CD4-positive, alpha-beta T cell (primary cell): ENCODE measurements at regions of chr6 and their contacts with region 1.

Region 1: DNA sequence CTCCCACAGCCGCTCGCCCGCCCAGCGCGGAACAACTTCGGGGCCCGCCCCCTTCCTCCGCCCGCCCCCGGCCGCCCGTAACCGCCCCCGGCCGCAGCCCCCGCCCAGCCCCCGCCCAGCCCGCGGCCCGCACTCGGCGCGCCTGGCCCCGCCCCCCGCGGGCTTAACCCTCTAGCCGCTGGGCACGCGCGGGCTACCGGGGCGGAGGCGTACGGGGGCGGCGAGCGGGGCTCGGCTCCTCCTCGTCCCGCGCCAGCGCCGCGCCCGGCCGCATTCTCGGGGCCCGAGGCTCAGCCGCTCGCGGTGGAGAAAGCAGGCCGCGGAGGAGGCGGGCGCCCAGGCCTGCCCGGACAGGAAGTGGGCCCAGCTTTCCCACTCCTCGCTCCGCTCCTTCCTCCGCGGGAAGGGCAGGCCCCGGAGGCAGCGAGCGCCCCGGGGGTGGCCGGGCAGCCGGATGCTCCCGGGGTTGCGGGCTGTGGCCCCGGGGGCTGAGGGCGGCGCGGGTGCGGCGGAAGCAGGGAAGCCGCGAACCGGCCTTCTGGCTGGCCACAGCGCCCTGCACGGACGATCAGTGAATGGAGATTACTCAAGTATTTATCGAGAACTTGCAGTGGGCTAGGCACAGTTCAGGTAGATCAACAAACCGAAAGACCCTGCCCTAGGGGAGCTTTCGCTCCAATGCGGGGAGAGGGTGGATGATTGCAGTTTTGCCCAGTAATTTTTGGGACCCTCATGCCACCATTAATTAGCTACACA is at the start of gene TRAM2:
- DNase-seq: peak; percentile 61 to 92 (median 75)
- ATAC-seq: peak; percentile 67
- H3K4me3 ChIP-seq: peak within 1 kb of the TSS; percentile 69
- H3K4me3 Mint-ChIP-seq: peak within 1 kb of the TSS; percentile 86
- H3K27ac ChIP-seq: peak within 1 kb of the TSS in 1 of 2 donors; percentile 60
- H3K27ac Mint-ChIP-seq: peak within 1 kb of the TSS; percentile 86
- H3K4me1 ChIP-seq: peaks cover 39% of the 10 kb centered on the region
- H3K4me1 Mint-ChIP-seq: peaks cover 56% of the 10 kb centered on the region
- H3K27me3 ChIP-seq: no peaks in the 10 kb centered on the region
- H3K27me3 Mint-ChIP-seq: no peaks in the 10 kb centered on the region
- CTCF ChIP-seq: no peak
- total RNA-seq, gene TRAM2: 7.1 to 7.6 TPM

Region 2: DNA sequence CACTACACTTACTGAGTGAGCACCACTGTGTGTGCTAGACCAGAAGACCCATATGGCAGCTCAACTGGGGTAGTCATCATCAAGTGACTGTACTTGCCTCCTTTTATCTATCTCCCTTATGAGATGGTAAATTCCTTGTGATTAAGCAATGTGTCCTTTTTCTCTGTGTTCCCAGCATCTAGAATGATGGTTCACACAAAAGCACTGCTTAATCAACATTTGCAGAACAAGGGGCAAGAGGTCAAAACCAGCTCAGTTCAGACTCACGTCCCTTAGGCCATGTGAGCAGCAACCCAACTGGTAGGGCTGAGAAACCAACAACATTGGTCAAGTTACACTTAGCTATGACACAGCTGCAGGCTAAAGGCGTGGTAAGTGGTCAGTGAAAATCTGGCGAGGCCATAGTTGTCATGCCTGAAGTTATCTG is 10.3 kb before region 1 on chr6:
- CTCF ChIA-PET with region 1: interaction called, 4 read pairs
- POLR2A ChIA-PET with region 1: interaction called, 10 read pairs
- intact Hi-C with region 1: no loop called
- DNase-seq: no peak
- ATAC-seq: no peak
- H3K4me3 ChIP-seq: no peak overlapping the region
- H3K4me3 Mint-ChIP-seq: no peak overlapping the region
- H3K27ac ChIP-seq: no peak overlapping the region
- H3K27ac Mint-ChIP-seq: no peak overlapping the region
- H3K4me1 ChIP-seq: peaks cover 16% of the 10 kb centered on the region
- H3K4me1 Mint-ChIP-seq: peaks cover 77% of the 10 kb centered on the region
- H3K27me3 ChIP-seq: no peaks in the 10 kb centered on the region
- H3K27me3 Mint-ChIP-seq: no peaks in the 10 kb centered on the region
- CTCF ChIP-seq: no peak

Region 3: DNA sequence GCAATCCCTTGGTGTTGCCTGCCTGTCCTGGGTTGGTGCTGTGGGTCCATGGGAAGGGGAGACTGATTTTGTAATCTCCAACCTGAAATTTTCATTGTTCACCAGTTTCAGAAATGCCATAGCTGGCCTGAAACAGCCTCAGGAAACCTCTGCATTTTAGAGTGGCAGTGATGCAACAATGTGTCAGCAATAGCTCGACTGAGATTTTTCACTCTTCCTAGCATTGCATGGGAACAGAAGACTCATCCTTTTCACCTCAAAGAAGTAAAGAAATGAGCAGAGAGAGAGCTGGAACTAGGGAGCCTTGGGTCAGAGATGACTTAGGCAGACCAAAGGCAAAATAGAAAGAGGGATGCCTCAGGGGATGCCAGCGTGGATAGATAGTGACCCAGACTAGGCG is 70.0 kb after region 1 on chr6:
- CTCF ChIA-PET with region 1: interaction called, 5 read pairs
- POLR2A ChIA-PET with region 1: no interaction called
- intact Hi-C with region 1: loop called in 1 of 2 experiments (anchors 5 kb)
- DNase-seq: no peak
- ATAC-seq: no peak
- H3K4me3 ChIP-seq: no peak overlapping the region
- H3K4me3 Mint-ChIP-seq: no peak overlapping the region
- H3K27ac ChIP-seq: no peak overlapping the region
- H3K27ac Mint-ChIP-seq: no peak overlapping the region
- H3K4me1 ChIP-seq: no peaks in the 10 kb centered on the region
- H3K4me1 Mint-ChIP-seq: peaks cover 5% of the 10 kb centered on the region
- H3K27me3 ChIP-seq: peaks cover 0 to 2% of the 10 kb centered on the region in 2 experiments
- H3K27me3 Mint-ChIP-seq: peaks cover 9% of the 10 kb centered on the region
- CTCF ChIP-seq: no peak

Region 4: GRCh38 chr6:52670502-52671409 is 93.6 kb after region 1 on chr6 and contains the start of gene TMEM14A:
- CTCF ChIA-PET with region 1: no interaction called
- POLR2A ChIA-PET with region 1: interaction called, 3 read pairs
- intact Hi-C with region 1: loop called in 1 of 2 experiments (anchors 2 kb)
- DNase-seq: peak; percentile 81 to 95 (median 90)
- ATAC-seq: peak; percentile 94
- H3K4me3 ChIP-seq: peak within 1 kb of the TSS; percentile 69
- H3K4me3 Mint-ChIP-seq: peak within 1 kb of the TSS; percentile 91
- H3K27ac ChIP-seq: peak within 1 kb of the TSS in 1 of 2 donors; percentile 18
- H3K27ac Mint-ChIP-seq: peak within 1 kb of the TSS; percentile 29
- H3K4me1 ChIP-seq: peaks cover 24% of the 10 kb centered on the region
- H3K4me1 Mint-ChIP-seq: peaks cover 33% of the 10 kb centered on the region
- H3K27me3 ChIP-seq: no peaks in the 10 kb centered on the region
- H3K27me3 Mint-ChIP-seq: no peaks in the 10 kb centered on the region
- CTCF ChIP-seq: no peak
- total RNA-seq, gene TMEM14A: 3.4 TPM